Motor neuron (in vitro differentiated cells): ENCODE measurements at regions of chr1 and their contacts with region 1.

Region 1: GRCh38 chr1:164786980-164787833 is 228.2 kb downstream of the PBX1 start:
- ATAC-seq: peak; percentile 97 to 99 (median 98)
- H3K4me3 ChIP-seq: no peak overlapping the region
- H3K27ac ChIP-seq: peak overlapping the region; percentile 9 to 14
- H3K4me1 ChIP-seq: peaks cover 33 to 60% of the 10 kb centered on the region in 2 donors

Region 2: DNA sequence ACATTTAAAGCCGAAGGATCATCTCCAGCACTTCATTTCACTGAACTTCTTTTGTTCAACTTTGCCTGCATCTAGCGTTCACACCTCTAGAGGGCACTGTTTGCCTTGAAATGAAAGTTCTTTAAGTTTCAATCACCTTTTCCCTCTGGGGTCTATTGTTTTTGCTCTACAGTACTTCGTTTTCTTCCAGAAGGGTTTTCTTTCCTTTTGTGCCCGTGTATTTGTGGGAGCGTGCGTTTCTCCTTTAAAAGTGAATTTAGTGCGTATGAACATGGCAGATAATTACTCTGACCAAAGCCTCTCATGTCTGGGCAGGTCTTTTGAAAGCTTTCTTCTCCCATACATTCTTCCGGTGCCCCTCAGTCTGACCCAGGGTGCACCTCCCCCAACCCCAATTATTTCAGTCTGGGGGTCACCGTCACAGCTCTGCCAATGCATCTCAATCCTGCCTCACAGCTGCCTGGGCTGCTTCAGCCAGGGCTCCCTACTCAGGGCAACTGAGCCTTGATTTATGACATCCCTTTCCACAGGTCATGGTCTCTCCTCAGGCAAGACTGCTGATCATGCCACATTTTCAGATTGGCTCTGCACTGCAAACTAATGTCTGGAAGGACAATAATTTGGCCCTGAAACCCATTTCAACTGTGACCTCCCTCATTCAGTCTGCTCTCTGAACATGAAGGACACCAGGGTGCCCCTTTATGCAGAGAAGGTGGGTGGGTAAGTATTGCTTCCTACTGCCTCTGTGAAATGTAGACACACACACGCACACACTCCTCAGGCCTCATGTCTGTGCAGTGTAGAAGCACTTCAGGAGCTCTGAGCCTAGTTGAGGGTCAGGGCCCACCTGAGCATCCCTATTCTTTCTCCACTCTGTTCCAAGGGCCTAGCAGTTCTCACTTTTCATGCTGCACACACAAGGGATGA is 1376.9 kb before region 1 on chr1:
- in situ Hi-C with region 1: loop called in 3 of 9 experiments (anchors 25 kb)
- ATAC-seq: peak in 7 of 8 experiments; percentile 46 to 92 (median 84)
- H3K4me3 ChIP-seq: peak overlapping the region in 2 of 5 donors; percentile 7 to 9
- H3K27ac ChIP-seq: peak overlapping the region; percentile 3 to 11
- H3K4me1 ChIP-seq: peaks cover 20 to 25% of the 10 kb centered on the region in 2 donors

Region 3: GRCh38 chr1:164569241-164569640 is 218.0 kb before region 1 on chr1:
- in situ Hi-C with region 1: no loop called
- ATAC-seq: no peak
- H3K4me3 ChIP-seq: no peak overlapping the region
- H3K27ac ChIP-seq: no peak overlapping the region
- H3K4me1 ChIP-seq: peaks cover 33 to 68% of the 10 kb centered on the region in 2 donors

Region 4: GRCh38 chr1:164588516-164589341 is 198.5 kb before region 1 on chr1:
- in situ Hi-C with region 1: loop called in 2 of 9 experiments (anchors 25 kb)
- ATAC-seq: peak; percentile 33 to 76 (median 70)
- H3K4me3 ChIP-seq: peak overlapping the region in 3 of 5 donors; percentile 5 to 29 (median 21)
- H3K27ac ChIP-seq: peak overlapping the region; percentile 76 to 79
- H3K4me1 ChIP-seq: peaks cover 78 to 89% of the 10 kb centered on the region in 2 donors

Region 5: DNA sequence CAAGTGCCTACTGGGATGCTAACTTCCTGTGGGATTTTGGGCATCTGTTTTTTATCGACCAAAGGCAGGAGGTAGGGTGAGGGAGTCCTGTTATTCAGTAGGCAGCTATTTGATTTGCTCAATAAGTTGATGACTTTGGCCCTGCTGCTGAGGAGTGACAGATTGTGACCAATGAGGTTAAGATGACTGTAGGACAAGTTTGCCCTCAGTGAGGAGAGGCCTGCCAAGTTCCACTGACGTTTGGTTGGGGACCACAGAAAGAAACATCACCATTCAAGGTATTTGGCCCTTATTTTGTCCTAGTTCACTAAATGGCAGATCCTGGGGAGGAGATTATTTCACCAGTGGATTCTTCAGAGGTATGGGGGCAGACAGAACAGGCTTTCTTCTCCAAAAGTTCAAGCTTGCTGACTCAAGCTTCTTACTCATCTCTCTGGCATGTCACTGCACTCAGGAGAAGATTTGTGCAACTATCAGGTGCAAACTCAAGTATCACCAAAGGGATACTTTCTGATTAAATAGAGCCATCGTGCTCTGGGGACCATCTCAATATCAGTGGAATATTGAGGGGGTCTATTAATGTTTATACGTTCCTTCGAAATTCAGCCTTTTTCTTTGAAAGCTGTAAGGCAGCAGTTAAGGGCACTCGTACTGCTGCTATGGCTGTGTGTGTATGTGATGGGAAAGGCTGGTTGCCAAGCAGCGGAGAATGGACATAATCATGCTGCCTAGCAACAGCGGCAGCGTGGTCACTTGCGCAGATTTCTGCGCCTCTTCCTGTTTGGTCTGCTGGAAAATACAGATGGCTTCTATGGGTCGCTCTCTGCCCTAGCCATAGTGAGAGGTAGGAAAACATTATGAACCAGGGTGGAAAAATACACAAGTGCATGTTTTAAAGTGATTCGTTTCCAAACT is 149.5 kb before region 1 on chr1:
- in situ Hi-C with region 1: loop called in 1 of 9 experiments (anchors 25 kb)
- ATAC-seq: peak in 5 of 8 experiments; percentile 75 to 83 (median 79)
- H3K4me3 ChIP-seq: no peak overlapping the region
- H3K27ac ChIP-seq: peak overlapping the region; percentile 35 to 69
- H3K4me1 ChIP-seq: peaks cover 54 to 67% of the 10 kb centered on the region in 2 donors

Region 6: DNA sequence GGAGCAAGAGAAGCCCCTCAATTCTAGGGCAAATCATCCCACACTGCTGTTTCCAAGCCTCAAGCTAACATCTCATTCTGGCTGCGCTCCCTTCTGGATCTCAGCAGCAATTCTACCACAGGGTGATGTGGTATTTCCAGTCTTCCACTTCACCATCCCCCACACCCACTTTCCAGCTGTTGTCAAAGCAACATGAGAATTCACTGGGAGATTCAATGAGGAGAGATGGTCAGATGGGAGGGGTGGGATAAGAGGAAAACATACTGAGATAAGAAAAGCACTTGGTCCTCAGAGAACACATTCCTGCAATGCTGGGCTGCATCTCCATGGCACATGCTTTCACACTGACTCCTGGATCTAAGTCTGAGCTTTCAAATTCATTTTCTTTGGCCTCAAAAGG is 709.3 kb after region 1 on chr1:
- in situ Hi-C with region 1: no loop called
- ATAC-seq: peak in 2 of 8 experiments; percentile 18 to 39
- H3K4me3 ChIP-seq: no peak overlapping the region
- H3K27ac ChIP-seq: no peak overlapping the region
- H3K4me1 ChIP-seq: peaks cover 3 to 28% of the 10 kb centered on the region in 2 donors